ENCODE measurements at regions of chr14 and their contacts with region 1.

Region 1: GRCh38 chr14:32939254-32940065 is 781 bp downstream of the NPAS3 start:
- DNase-seq: peak in 1 of 2 experiments; percentile 46
- H3K4me3 ChIP-seq: peak overlapping the region; percentile 57
- H3K27ac ChIP-seq: no peak overlapping the region
- H3K4me1 ChIP-seq: no peaks in the 10 kb centered on the region
- H3K27me3 ChIP-seq: peaks cover 22% of the 10 kb centered on the region
- CTCF ChIP-seq: no peak

Region 2: GRCh38 chr14:32576088-32576795 is 363.2 kb before region 1 on chr14:
- CTCF ChIA-PET with region 1: no interaction called
- POLR2A ChIA-PET with region 1: no interaction called
- intact Hi-C with region 1: loop called (anchors 10 kb)
- DNase-seq: peak; percentile 15 to 39
- H3K4me3 ChIP-seq: no peak overlapping the region
- H3K27ac ChIP-seq: no peak overlapping the region
- H3K4me1 ChIP-seq: no peaks in the 10 kb centered on the region
- H3K27me3 ChIP-seq: no peaks in the 10 kb centered on the region
- CTCF ChIP-seq: peak; percentile 88

Region 3: DNA sequence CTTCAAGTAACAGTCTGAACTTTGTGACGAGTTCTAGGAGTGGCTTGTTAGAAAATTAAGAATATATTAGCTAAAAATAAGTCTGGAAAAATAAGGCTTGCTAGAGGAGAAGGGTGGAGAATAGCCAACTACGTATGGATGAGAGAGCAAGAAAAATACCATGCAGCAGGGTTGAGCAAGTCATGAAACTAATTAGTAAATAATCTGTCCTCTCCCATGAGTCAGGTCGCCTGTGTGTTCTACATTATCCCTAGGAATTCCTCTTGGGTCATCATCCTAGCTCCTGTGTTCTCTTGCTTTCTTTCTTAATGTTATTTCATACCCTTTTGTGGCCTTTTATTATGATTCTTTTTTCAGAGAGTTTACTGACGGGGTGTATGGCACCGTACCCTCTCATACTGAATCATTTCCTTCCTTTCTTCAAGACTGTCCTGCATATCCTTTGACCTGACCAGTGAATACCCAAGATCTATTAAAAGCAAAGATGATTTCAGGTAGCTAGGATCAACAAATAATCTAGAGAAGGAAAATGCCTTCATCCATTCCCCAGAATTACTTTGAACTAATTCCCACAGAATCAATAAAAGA is 178.0 kb before region 1 on chr14:
- CTCF ChIA-PET with region 1: interaction called, 10 read pairs
- POLR2A ChIA-PET with region 1: no interaction called
- intact Hi-C with region 1: no loop called
- DNase-seq: no peak
- H3K4me3 ChIP-seq: no peak overlapping the region
- H3K27ac ChIP-seq: no peak overlapping the region
- H3K4me1 ChIP-seq: no peaks in the 10 kb centered on the region
- H3K27me3 ChIP-seq: no peaks in the 10 kb centered on the region
- CTCF ChIP-seq: no peak